ENCODE measurements at regions of chr6 and their contacts with region 1.

Region 1: DNA sequence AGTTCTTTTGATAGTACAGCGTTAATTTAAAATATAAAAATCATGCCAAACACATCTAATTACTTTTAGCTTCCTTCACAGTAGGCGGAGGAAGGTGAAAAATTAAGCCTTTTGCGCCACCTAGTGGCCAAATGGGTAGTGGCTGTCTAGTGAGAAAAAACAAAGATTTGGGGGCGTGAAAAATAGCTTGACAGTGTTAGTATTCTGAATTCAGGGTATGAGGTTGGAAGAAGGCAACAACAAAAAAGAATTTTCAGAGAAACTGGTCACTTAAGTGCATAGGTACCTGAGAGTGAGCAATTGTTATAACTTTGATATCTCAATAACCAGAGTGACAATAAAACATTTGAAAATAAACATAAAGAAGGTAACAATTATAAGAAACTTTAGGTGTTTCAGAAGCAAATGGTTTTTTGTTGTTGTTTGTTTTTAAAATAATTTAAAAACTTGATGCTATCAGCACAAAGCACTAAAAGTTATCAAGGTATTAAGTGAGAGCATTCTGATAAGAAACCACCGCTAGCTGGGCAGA is 14.3 kb downstream of the PSMB9 start:
- DNase-seq: peak; percentile 79
- H3K4me3 Mint-ChIP-seq: no peak overlapping the region
- H3K27ac Mint-ChIP-seq: no peak overlapping the region
- H3K4me1 Mint-ChIP-seq: no peaks in the 10 kb centered on the region
- H3K27me3 Mint-ChIP-seq: peaks cover 43% of the 10 kb centered on the region
- CTCF ChIP-seq: peak; percentile 82

Region 2: GRCh38 chr6:32700391-32701040 is 167.8 kb before region 1 on chr6:
- CTCF ChIA-PET with region 1: interaction called, 5 read pairs
- POLR2A ChIA-PET with region 1: no interaction called
- intact Hi-C with region 1: loop called (anchors 5 kb)
- DNase-seq: peak; percentile 73
- H3K4me3 Mint-ChIP-seq: no peak overlapping the region
- H3K27ac Mint-ChIP-seq: no peak overlapping the region
- H3K4me1 Mint-ChIP-seq: no peaks in the 10 kb centered on the region
- H3K27me3 Mint-ChIP-seq: peaks cover 89% of the 10 kb centered on the region
- CTCF ChIP-seq: peak; percentile 45

Region 3: DNA sequence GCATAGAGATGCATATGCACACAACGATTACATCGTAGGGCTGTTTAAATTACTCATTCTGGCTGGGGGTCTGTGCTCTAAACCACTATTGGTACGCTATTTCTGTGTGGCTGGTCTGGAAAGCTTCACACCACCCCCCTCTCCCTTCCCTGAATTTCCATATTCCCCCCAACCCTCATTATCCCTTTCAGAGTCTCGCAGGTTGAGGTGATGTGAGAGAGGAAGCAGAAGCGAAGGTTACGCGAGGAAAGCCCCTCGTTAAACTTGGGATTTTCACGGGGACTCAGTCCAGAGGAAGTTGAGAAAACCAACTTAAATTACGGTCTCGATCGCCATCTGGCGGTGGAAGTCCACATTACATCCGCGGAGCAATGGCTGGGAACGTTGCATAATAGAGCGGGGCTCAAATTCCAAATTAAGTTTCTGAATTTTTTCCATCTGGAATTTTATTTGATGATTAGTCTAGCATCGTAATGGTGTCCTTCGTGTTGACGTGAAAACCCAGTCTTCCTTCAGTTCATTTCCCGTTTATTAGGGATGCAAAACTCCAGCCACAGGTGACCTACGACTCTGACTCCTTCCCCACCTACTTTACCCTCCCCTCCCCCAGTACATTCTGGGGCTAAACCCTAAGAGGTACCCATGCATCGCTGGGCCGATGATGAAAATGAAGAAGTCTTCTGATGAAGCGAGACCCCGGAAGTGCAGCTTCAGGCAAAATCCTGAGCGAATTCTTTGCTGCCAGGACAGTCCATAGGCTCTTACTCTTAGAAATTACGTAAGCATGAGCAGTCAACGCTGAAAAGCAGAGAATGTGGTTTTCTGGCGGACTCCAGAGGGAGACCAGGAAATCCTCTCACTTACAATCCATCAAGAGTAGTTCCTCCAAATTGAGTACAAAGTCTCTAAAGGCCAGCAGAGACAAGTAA is 71.2 kb before region 1 on chr6:
- CTCF ChIA-PET with region 1: interaction called, 7 read pairs
- POLR2A ChIA-PET with region 1: no interaction called
- intact Hi-C with region 1: loop called (anchors 1 kb)
- DNase-seq: peak; percentile 66
- H3K4me3 Mint-ChIP-seq: peak overlapping the region; percentile 62
- H3K27ac Mint-ChIP-seq: no peak overlapping the region
- H3K4me1 Mint-ChIP-seq: peaks cover 12% of the 10 kb centered on the region
- H3K27me3 Mint-ChIP-seq: peaks cover 76% of the 10 kb centered on the region
- CTCF ChIP-seq: peak; percentile 84

Region 4: GRCh38 chr6:32825966-32826365 is 42.4 kb before region 1 on chr6:
- CTCF ChIA-PET with region 1: interaction called, 42 read pairs
- POLR2A ChIA-PET with region 1: interaction called, 10 read pairs
- intact Hi-C with region 1: loop called (anchors 1 kb)
- DNase-seq: peak; percentile 87
- H3K4me3 Mint-ChIP-seq: no peak overlapping the region
- H3K27ac Mint-ChIP-seq: peak overlapping the region; percentile 49
- H3K4me1 Mint-ChIP-seq: peaks cover 7% of the 10 kb centered on the region
- H3K27me3 Mint-ChIP-seq: no peaks in the 10 kb centered on the region
- CTCF ChIP-seq: peak; percentile 42

Region 5: GRCh38 chr6:32838114-32838958 is 30.0 kb before region 1 on chr6 and contains the start of gene TAP2:
- CTCF ChIA-PET with region 1: interaction called, 109 read pairs
- POLR2A ChIA-PET with region 1: interaction called, 70 read pairs
- intact Hi-C with region 1: loop called (anchors 1 kb)
- DNase-seq: peak; percentile 91
- H3K4me3 Mint-ChIP-seq: peak within 1 kb of the TSS; percentile 77
- H3K27ac Mint-ChIP-seq: peak within 1 kb of the TSS; percentile 29
- H3K4me1 Mint-ChIP-seq: peaks cover 34% of the 10 kb centered on the region
- H3K27me3 Mint-ChIP-seq: no peaks in the 10 kb centered on the region
- CTCF ChIP-seq: peak; percentile 96
- total RNA-seq, gene TAP2: 43.3 and 61.2 TPM in 2 replicates

Region 6: DNA sequence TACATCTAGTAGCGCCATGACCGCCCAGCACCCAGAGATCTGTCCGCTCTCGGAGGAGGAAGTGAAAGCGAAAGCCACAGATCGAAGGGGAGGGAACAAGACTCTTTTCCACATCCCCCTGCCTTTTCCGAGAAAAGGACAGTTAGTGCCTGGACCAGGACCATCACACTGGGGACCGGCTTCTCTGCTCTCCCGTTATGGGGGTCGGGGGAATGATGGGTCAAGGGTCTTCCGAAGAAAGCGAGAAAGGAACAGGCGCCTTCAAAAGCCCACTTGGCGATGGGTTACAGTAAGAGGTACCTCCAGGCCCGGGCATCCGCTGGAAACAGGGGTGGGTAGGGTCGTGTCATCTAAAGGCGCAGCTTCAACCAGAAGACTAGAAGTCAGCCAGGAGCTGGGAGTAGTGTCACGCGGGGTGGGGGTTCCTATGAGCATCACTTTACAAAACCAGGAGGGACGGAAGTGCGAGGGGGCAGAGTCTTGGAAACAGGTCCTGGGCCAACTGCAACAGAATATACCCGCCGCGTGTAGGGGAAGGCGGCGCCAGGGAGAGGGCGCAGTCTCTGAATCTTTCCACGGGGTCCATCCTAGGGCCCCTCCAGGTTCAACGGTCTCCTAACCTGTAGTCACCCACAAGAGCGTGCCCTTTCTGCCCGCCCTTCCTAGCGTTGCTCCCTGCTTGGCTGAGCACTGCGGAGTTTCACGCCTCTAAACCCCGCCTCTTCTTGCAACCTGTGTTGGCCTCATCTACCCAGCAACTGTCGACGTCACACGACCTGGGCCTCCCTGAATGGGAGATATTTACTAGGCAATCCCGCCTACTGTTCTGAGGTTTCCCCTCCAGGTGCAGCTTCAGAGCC is 24.1 kb before region 1 on chr6 and contains the start of gene PSMB8:
- CTCF ChIA-PET with region 1: interaction called, 109 read pairs
- POLR2A ChIA-PET with region 1: interaction called, 70 read pairs
- intact Hi-C with region 1: no loop called
- DNase-seq: peak; percentile 98
- H3K4me3 Mint-ChIP-seq: peak within 1 kb of the TSS; percentile 99
- H3K27ac Mint-ChIP-seq: peak within 1 kb of the TSS; percentile 96
- H3K4me1 Mint-ChIP-seq: peaks cover 30% of the 10 kb centered on the region
- H3K27me3 Mint-ChIP-seq: no peaks in the 10 kb centered on the region
- CTCF ChIP-seq: no peak
- total RNA-seq, gene PSMB8: 34.1 and 47.3 TPM in 2 replicates

Region 7: GRCh38 chr6:32853541-32854375 is 14.6 kb before region 1 on chr6 and contains the starts of genes PSMB9 and TAP1:
- CTCF ChIA-PET with region 1: interaction called, 35 read pairs
- POLR2A ChIA-PET with region 1: interaction called, 15 read pairs
- intact Hi-C with region 1: loop called (anchors 1 kb)
- DNase-seq: peak; percentile 94
- H3K4me3 Mint-ChIP-seq: peak within 1 kb of the TSS; percentile 99
- H3K27ac Mint-ChIP-seq: peak within 1 kb of the TSS; percentile 94
- H3K4me1 Mint-ChIP-seq: peaks cover 21% of the 10 kb centered on the region
- H3K27me3 Mint-ChIP-seq: no peaks in the 10 kb centered on the region
- CTCF ChIP-seq: peak; percentile 51
- total RNA-seq, gene PSMB9: 3.5 and 4.4 TPM in 2 replicates
- total RNA-seq, gene TAP1: 32.3 and 35.2 TPM in 2 replicates